Ascending aorta (tissue), 2 donors: ENCODE measurements at regions of chr14 and their contacts with region 1.

Region 1: DNA sequence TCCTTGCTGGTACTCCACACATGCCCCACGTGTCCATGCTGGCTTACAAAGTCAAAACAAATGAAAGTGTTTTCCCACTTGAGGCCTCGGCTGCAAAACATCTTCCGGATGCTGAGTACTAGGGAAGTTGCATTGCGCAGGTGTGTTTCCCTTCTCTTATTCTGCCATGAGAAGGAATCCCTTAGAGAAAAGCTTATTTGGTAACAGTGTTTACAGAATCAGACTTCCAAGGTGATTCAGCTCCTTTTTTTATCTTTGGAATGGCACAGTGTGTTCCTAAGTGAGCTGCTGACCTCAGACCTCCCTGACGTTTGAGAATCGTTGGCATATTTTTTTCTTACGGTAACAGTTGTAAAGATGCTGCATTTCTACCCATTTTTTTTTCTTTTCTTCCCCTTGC is 211.3 kb downstream of the ESR2 start:
- DNase-seq: peak in 1 of 2 donors; percentile 86
- H3K4me3 ChIP-seq: no peak overlapping the region
- H3K27ac ChIP-seq: peak overlapping the region; percentile 85 to 88
- H3K4me1 ChIP-seq: peaks cover 4 to 16% of the 10 kb centered on the region in 2 donors
- H3K27me3 ChIP-seq: no peaks in the 10 kb centered on the region
- CTCF ChIP-seq: no peak

Region 2: GRCh38 chr14:64098120-64098519 is 15.3 kb after region 1 on chr14:
- intact Hi-C with region 1: no loop called
- DNase-seq: no peak
- H3K4me3 ChIP-seq: no peak overlapping the region
- H3K27ac ChIP-seq: no peak overlapping the region
- H3K4me1 ChIP-seq: no peaks in the 10 kb centered on the region
- H3K27me3 ChIP-seq: no peaks in the 10 kb centered on the region
- CTCF ChIP-seq: no peak

Region 3: GRCh38 chr14:64117671-64118402 is 35.0 kb after region 1 on chr14:
- intact Hi-C with region 1: loop called (anchors 1 kb)
- DNase-seq: peak; percentile 72 to 95
- H3K4me3 ChIP-seq: no peak overlapping the region
- H3K27ac ChIP-seq: peak overlapping the region; percentile 90 to 96
- H3K4me1 ChIP-seq: peaks cover 7 to 48% of the 10 kb centered on the region in 2 donors
- H3K27me3 ChIP-seq: no peaks in the 10 kb centered on the region
- CTCF ChIP-seq: no peak